Dorsolateral prefrontal cortex (tissue), 120 donors: ENCODE measurements at regions of chr3 and their contacts with region 1.

Region 1: GRCh38 chr3:67384760-67385397 is 269.5 kb downstream of the SUCLG2 start:
- DNase-seq: peak in 6 of 10 donors; percentile 18 to 52 (median 42)
- H3K4me3 ChIP-seq: no peak overlapping the region
- H3K27ac ChIP-seq: no peak overlapping the region
- H3K27me3 ChIP-seq: no peaks in the 10 kb centered on the region
- CTCF ChIP-seq: peak in 54 of 56 donors; percentile 25 to 66 (median 52)

Region 2: DNA sequence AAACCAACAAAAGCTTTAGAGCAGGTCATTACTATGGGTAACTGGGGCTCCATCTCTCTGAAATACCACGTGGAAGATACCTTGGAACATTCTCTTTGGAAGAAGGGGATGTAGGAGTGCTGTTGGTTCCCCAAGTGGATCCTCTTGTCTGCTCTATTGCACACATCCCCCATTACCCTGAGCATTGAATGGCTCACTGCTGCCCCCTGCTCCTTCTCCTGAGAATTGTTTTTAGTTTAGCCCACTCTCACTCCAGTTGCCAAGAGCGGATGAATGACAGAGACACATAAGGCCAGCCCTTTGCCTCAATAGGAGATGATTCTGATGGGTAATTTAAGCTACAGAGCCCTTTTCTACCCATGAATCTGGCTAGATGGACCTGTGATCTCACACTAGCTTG is 405.2 kb after region 1 on chr3:
- intact Hi-C with region 1: loop called in 1 of 2 experiments (anchors 5 kb)
- DNase-seq: no peak
- H3K4me3 ChIP-seq: no peak overlapping the region
- H3K27ac ChIP-seq: no peak overlapping the region
- H3K27me3 ChIP-seq: no peaks in the 10 kb centered on the region
- CTCF ChIP-seq: peak in 51 of 56 donors; percentile 19 to 68 (median 47)

Region 3: DNA sequence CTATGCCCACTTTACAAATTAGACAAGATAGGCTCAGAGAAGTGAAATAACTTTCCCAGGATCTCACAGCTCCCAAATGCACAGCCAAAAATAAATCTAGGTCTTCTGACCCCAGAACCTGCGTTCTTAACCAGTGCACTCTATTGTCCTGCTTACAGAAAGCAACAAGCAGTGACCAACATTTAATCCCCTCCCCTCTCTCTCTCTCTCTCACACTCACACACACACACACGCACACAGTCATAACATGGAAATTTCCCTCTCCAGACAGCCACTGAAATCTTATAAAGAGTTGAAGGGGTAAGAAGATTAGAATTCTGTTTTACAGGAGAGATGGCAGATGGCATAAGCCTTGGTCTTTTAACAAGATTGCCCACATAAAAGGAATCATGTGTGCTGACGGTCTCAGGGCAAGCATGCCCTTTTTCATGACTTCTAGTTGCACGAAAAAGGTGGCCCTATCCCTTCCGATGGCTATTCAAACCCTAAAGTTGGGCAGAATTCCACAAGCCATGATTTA is 1599.2 kb after region 1 on chr3:
- intact Hi-C with region 1: loop called in 1 of 2 experiments (anchors 5 kb)
- DNase-seq: no peak
- H3K4me3 ChIP-seq: no peak overlapping the region
- H3K27ac ChIP-seq: no peak overlapping the region
- H3K27me3 ChIP-seq: no peaks in the 10 kb centered on the region
- CTCF ChIP-seq: no peak